Endothelial cell of umbilical vein (primary cell): ENCODE measurements at regions of chr6 and their contacts with region 1.

Region 1: DNA sequence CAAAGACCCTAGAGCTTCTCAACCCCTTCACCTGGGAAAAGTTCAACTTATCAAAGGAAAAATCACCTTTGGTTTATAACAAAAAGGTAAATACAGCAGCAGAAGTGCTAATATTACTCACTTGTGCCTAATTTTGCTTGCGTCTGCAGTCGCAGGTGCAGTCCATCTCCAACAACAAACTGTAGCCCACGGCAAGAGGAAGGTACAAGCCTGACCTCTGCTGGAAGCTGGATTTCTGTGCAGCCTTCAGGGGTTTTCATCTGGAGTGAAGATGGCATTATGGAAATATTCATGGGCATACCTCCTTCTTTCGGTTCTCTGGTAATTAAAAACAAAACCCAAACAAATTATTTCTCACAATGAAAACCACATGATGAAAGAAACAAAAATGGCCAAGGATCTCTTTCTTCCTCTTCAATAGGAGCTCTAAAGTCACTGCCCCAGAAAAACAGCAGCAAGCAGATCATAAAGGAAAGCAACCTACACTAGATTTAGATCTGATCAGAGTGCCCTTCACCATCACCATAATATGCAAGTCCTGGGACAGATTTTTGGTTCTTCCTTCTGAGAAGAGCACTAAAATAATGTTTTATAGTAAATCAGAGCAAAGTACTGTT is 7.8 kb downstream of the UBE3D start:
- DNase-seq: peak; percentile 57
- H3K4me3 ChIP-seq: no peak overlapping the region
- H3K27ac ChIP-seq: no peak overlapping the region
- H3K4me1 ChIP-seq: no peaks in the 10 kb centered on the region
- H3K27me3 ChIP-seq: no peaks in the 10 kb centered on the region
- CTCF ChIP-seq: peak; percentile 65 to 75
- POLR2A ChIP-seq: no peak

Region 2: GRCh38 chr6:82247634-82248232 is 810.1 kb before region 1 on chr6 and contains the start of gene IBTK:
- CTCF ChIA-PET with region 1: interaction called, 40 read pairs
- POLR2A ChIA-PET with region 1: no interaction called
- dilution Hi-C with region 1: no loop called
- intact Hi-C with region 1: loop called (anchors 1 kb)
- DNase-seq: peak; percentile 93
- H3K4me3 ChIP-seq: peak within 1 kb of the TSS; percentile 60 to 91 (median 67)
- H3K27ac ChIP-seq: peak within 1 kb of the TSS; percentile 67
- H3K4me1 ChIP-seq: peaks cover 35% of the 10 kb centered on the region
- H3K27me3 ChIP-seq: no peaks in the 10 kb centered on the region
- CTCF ChIP-seq: no peak
- POLR2A ChIP-seq: peak; percentile 87
- total RNA-seq, gene IBTK: 29.5 and 30.5 TPM in 2 replicates

Region 3: DNA sequence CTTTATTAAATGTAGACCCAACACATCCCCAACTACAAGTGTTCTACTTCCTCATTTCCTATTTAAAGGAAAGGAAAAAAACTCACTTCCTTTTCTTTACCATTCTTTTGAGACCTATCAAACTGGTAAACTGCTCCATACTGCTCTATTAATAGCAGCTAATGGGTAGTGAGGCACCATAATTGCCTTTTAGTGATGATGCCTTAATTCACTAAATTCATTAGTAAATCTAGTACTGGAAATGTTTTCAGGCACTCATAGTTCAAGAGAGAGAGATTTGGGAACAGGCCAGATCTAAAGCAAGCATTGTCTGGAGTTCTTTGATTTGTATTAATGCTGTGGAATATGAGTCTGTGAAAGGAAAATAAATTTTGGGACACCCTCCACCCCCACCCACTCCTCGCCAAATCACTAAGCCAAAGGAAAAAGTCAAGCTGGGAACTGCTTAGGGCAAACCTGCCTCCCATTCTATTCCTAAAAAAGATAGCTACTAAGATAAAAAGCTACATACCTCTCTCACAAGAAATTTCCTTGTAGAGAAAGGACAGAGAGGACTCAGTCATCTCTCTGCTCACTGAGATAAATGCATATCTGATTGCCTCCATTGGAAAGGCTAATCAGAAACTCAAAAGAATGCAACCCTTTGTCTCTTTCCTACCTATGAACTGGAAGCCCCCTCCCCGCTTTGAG is 796.7 kb before region 1 on chr6:
- CTCF ChIA-PET with region 1: interaction called, 40 read pairs
- POLR2A ChIA-PET with region 1: no interaction called
- dilution Hi-C with region 1: no loop called
- intact Hi-C with region 1: no loop called
- DNase-seq: peak; percentile 14
- H3K4me3 ChIP-seq: no peak overlapping the region
- H3K27ac ChIP-seq: no peak overlapping the region
- H3K4me1 ChIP-seq: peaks cover 12% of the 10 kb centered on the region
- H3K27me3 ChIP-seq: no peaks in the 10 kb centered on the region
- CTCF ChIP-seq: no peak
- POLR2A ChIP-seq: no peak

Region 4: DNA sequence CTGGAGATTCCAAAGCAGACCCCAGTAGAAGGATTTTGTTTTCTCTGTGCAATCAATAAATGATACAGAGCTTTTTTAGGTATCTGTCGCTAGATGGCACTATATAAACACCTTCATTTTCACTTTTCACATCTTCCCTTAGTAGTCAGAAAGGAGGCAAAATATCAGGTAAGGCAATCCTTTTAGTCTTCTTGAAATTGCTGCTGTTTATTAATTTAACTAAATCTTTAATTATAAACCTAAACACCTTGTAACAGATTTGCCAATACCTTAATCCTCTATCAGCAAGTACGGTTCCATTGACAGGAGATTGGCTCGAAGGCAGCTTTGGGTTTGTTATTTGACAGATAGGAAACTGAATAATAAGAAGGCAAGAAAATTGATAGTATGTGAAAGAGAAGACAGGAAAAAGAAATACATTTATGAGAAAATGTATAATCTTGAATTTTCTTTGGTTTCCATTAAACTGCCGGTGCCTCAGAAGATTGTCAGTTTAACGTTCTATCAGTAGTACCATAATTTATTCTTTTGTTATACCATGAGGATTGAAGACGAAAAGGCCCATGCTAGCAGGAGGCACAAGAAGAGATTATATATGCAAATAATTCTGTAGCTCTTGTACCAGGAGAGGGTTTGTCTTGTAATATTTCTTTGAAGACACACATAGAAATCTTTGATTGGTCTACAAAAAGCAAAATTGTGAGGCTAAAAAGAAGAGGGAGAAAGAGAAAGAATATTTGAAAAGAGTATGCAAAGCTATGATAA is 786.8 kb before region 1 on chr6:
- CTCF ChIA-PET with region 1: interaction called, 168 read pairs
- POLR2A ChIA-PET with region 1: no interaction called
- dilution Hi-C with region 1: no loop called
- intact Hi-C with region 1: loop called (anchors 1 kb)
- DNase-seq: peak; percentile 32
- H3K4me3 ChIP-seq: no peak overlapping the region
- H3K27ac ChIP-seq: no peak overlapping the region
- H3K4me1 ChIP-seq: no peaks in the 10 kb centered on the region
- H3K27me3 ChIP-seq: peaks cover 3 to 4% of the 10 kb centered on the region in 2 experiments
- CTCF ChIP-seq: peak; percentile 27 to 48
- POLR2A ChIP-seq: no peak

Region 5: DNA sequence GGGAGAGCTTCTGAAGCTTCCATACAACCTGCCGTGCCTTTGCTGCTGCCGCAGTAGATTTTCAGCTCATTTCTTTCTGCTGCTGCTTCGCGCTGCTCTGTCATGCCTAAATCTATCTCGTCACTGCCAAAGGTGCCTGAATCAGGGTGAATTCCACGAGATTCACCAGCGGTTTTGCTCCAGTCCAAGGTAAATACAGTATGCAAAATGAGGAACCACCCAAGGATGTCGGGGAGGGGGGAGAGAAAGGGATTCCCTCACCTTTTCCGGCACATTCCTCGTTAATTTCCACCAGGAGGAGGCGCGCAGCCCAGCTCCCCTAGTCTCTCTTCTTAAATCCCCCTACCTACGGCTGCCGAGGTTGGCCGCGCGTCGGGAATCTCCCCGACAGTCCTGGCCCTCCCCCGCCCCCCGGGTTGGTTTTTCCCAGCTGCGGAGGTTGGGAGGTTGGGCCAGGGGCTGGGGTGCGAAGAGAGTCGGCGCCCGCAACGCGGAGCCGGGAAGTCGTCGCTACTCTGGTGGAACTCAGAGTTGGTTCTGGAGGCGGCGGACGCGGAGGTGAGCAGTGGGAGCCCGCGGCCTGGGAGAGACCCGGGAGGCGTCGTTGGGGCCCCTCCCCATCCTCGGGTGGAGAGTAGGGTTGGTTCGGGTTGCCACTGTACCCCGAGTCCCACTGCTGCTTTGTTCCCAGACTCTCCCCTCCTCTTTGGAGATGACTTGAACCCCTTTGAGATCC is 694.3 kb before region 1 on chr6 and contains the start of gene TPBG:
- CTCF ChIA-PET with region 1: interaction called, 9 read pairs
- POLR2A ChIA-PET with region 1: no interaction called
- dilution Hi-C with region 1: no loop called
- intact Hi-C with region 1: loop called (anchors 1 kb)
- DNase-seq: peak; percentile 38
- H3K4me3 ChIP-seq: peak within 1 kb of the TSS; percentile 74 to 97 (median 83)
- H3K27ac ChIP-seq: no peak within 1 kb of the TSS
- H3K4me1 ChIP-seq: peaks cover 4% of the 10 kb centered on the region
- H3K27me3 ChIP-seq: peaks cover 18 to 26% of the 10 kb centered on the region in 2 experiments
- CTCF ChIP-seq: peak; percentile 18 to 46
- POLR2A ChIP-seq: no peak
- total RNA-seq, gene TPBG: 9.0 and 11.4 TPM in 2 replicates

Region 6: DNA sequence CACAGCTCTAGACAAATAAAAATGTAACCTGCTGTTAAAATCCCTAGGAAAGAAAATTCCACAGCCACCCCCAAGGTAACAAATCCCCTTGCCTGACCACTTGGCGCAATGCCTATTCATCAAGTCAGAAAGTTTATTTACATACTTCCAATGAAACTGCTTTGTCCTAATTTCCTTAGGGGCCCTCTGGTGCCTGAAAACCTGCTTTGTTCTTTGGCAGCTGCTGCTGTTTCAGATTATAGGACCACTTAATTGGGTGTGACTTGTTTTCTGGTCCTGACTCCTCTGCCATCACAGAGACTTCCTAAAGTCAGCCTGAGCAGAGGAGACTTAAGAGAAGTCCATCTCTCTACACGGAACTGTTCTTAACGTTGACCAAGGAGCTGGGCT is 315.8 kb before region 1 on chr6:
- CTCF ChIA-PET with region 1: no interaction called
- POLR2A ChIA-PET with region 1: no interaction called
- dilution Hi-C with region 1: no loop called
- intact Hi-C with region 1: loop called (anchors 10 kb)
- DNase-seq: no peak
- H3K4me3 ChIP-seq: no peak overlapping the region
- H3K27ac ChIP-seq: no peak overlapping the region
- H3K4me1 ChIP-seq: no peaks in the 10 kb centered on the region
- H3K27me3 ChIP-seq: peaks cover 0 to 2% of the 10 kb centered on the region in 2 experiments
- CTCF ChIP-seq: no peak
- POLR2A ChIP-seq: no peak